ENCODE measurements at regions of chr20 and their contacts with region 1.

Region 1: DNA sequence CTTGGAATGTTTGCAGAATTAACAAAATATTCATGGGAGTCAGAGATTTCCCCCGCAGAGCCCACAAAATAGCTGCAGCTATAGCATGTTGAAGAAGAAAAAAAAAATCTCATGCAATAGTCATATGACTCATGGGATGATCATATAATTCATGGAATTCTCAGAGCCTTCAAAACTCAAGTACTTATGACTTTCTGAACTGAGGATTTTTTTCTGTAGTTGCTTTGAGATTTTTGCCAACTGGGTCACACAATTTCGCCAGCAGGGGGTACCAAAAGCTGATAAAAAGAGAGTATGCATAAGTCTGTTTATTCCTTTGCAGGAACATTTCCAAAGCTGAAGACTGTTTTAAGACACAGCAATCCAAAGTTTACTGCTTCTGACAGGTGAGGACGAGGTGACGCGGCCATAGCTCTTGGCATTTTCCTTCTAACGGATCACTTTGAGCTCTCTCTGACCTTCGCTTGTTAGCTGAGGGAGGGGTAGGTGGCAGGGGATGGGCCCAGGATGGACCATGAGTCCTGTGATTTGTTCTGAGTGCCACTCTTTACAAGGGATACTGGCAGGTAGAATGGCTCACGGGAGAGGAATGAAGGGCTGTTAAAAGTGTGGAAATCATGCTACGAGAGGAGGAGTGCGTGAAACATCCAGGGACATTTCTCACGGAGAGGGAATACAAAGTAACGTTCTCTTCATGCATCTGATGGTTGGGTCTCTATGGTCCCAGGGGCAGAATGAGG is 586.2 kb upstream of the CHD6 start:
- DNase-seq: no peak
- H3K4me3 ChIP-seq: no peak overlapping the region
- H3K27ac ChIP-seq: no peak overlapping the region
- H3K4me1 ChIP-seq: no peaks in the 10 kb centered on the region
- H3K27me3 ChIP-seq: no peaks in the 10 kb centered on the region
- CTCF ChIP-seq: peak in 3 of 11 experiments; percentile 12 to 24 (median 13)
- POLR2A ChIP-seq: no peak

Region 2: GRCh38 chr20:43187476-43188233 is 983.3 kb after region 1 on chr20:
- intact Hi-C with region 1: loop called (anchors 5 kb)
- DNase-seq: peak; percentile 85
- H3K4me3 ChIP-seq: peak overlapping the region in 2 of 8 donors; percentile 16 to 40
- H3K27ac ChIP-seq: no peak overlapping the region
- H3K4me1 ChIP-seq: peaks cover 0 to 26% (median 13%) of the 10 kb centered on the region in 6 donors
- H3K27me3 ChIP-seq: peaks cover 0 to 78% (median 45%) of the 10 kb centered on the region in 7 donors
- CTCF ChIP-seq: peak; percentile 48 to 92 (median 89)
- POLR2A ChIP-seq: no peak

Measured in spleen (tissue), 13 donors.